B cell (primary cell): ENCODE measurements at regions of chr14 and their contacts with region 1.

Region 1: DNA sequence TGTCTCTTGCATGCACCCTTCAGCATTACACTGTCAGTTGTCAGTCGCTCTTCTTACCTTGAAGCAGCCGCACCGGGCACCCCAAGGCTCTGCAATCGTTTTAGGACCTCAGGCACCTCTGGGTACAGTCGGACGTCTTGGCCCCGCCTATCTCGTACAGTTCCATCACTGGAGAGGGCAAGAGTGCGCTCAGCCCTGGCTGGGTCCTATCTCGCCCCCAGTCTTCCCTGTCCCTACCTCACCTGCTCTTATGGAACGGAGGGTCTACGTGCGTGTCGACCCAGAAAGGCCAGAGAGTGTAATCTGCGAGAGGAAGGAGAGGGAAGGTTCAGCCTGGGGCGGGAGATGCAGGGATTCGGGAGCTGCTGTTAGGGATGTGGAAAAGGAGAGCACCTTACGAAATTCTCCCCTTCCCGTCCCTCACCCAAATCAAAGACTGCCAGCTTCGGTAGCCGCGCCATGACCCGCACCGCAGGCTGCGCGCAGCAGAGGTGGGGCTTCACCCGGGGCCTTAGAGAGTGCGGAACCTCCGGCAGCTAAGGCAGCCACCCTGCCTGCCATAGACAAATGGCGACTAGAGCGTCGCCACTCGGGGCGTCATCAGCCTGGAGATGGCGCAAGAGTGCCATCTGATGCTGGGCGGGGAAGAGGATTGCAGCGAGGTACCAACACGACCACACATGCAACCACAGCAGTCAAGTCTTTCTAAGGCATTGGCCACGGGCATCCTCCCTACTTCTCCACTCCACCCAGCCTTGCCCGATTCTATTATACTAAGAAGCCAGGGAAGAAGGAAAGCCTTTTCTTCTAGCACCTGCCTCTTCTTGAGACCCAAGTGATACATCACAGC is at the start of gene MDP1:
- DNase-seq: peak; percentile 94
- ATAC-seq: peak; percentile 75
- H3K4me3 ChIP-seq: peak within 1 kb of the TSS; percentile 88 to 99 (median 96)
- H3K4me3 Mint-ChIP-seq: peak within 1 kb of the TSS; percentile 93
- H3K27ac ChIP-seq: peak within 1 kb of the TSS; percentile 89 to 98
- H3K27ac Mint-ChIP-seq: peak within 1 kb of the TSS; percentile 96
- H3K4me1 ChIP-seq: peaks cover 32 to 33% of the 10 kb centered on the region in 2 donors
- H3K4me1 Mint-ChIP-seq: peaks cover 38% of the 10 kb centered on the region
- H3K27me3 ChIP-seq: no peaks in the 10 kb centered on the region
- H3K27me3 Mint-ChIP-seq: no peaks in the 10 kb centered on the region
- CTCF ChIP-seq: peak; percentile 80
- total RNA-seq, gene MDP1: 11.3 and 17.0 TPM in 2 replicates

Region 2: DNA sequence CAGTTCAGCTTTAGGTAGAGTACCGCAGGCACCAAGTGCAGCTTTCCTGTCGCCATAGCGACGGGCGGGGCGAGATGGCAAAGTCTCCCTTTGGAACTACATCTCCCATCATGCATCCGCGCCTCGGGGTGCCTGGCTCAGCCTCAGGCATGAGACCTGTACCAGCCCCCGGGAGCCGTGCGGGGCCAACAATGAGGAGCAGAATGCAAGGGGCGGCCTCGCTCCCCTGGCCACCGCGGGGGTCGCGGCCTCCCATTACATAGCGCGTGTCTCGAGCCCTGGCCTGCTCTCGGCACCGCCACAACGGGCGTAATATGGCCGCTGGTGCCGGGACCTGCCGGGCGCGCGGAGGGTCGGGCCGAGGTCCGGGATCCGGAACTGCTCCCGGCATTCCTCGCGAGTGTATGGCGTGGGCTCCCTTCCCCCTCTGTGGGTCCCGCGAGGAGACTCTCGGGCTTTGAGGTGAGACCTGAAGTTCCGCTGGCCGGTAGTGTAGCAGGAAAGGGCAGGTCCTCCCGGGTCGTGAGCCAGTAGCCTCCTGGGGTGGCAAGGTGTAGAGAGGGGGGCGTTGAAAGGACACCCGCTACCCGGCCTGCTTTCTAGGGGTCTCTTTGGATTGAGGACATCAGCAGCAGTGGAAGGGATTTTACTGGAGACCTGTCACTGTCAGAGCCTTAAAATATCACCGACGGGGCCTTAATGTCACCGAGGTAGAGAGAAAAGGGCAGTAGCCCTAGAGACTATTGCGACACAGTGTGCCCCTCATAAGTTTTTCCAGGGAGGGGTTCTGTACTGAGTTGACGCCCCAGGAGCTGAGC is 659.6 kb before region 1 on chr14 and contains the start of gene THTPA:
- CTCF ChIA-PET with region 1: no interaction called
- POLR2A ChIA-PET with region 1: no interaction called
- intact Hi-C with region 1: loop called (anchors 10 kb)
- DNase-seq: peak; percentile 96
- ATAC-seq: peak; percentile 78
- H3K4me3 ChIP-seq: peak within 1 kb of the TSS; percentile 17 to 97 (median 81)
- H3K4me3 Mint-ChIP-seq: peak within 1 kb of the TSS; percentile 98
- H3K27ac ChIP-seq: peak within 1 kb of the TSS; percentile 69 to 84
- H3K27ac Mint-ChIP-seq: peak within 1 kb of the TSS; percentile 99
- H3K4me1 ChIP-seq: peaks cover 19 to 36% of the 10 kb centered on the region in 2 donors
- H3K4me1 Mint-ChIP-seq: peaks cover 45% of the 10 kb centered on the region
- H3K27me3 ChIP-seq: no peaks in the 10 kb centered on the region
- H3K27me3 Mint-ChIP-seq: no peaks in the 10 kb centered on the region
- CTCF ChIP-seq: no peak
- total RNA-seq, gene THTPA: 21.4 and 21.5 TPM in 2 replicates

Region 3: GRCh38 chr14:24121210-24121609 is 94.5 kb before region 1 on chr14:
- CTCF ChIA-PET with region 1: no interaction called
- POLR2A ChIA-PET with region 1: no interaction called
- intact Hi-C with region 1: no loop called
- DNase-seq: no peak
- ATAC-seq: no peak
- H3K4me3 ChIP-seq: no peak overlapping the region
- H3K4me3 Mint-ChIP-seq: no peak overlapping the region
- H3K27ac ChIP-seq: no peak overlapping the region
- H3K27ac Mint-ChIP-seq: no peak overlapping the region
- H3K4me1 ChIP-seq: peaks cover 28 to 33% of the 10 kb centered on the region in 2 donors
- H3K4me1 Mint-ChIP-seq: peaks cover 34% of the 10 kb centered on the region
- H3K27me3 ChIP-seq: no peaks in the 10 kb centered on the region
- H3K27me3 Mint-ChIP-seq: no peaks in the 10 kb centered on the region
- CTCF ChIP-seq: no peak

Region 4: GRCh38 chr14:24141097-24141880 is 74.4 kb before region 1 on chr14 and contains the start of gene EMC9:
- CTCF ChIA-PET with region 1: interaction called, 3 read pairs
- POLR2A ChIA-PET with region 1: interaction called, 7 read pairs
- intact Hi-C with region 1: loop called (anchors 1 kb)
- DNase-seq: peak; percentile 99
- ATAC-seq: peak; percentile 89
- H3K4me3 ChIP-seq: peak within 1 kb of the TSS; percentile 67 to 93 (median 82)
- H3K4me3 Mint-ChIP-seq: peak within 1 kb of the TSS; percentile 96
- H3K27ac ChIP-seq: peak within 1 kb of the TSS; percentile 63 to 80
- H3K27ac Mint-ChIP-seq: peak within 1 kb of the TSS; percentile 95
- H3K4me1 ChIP-seq: peaks cover 33 to 50% of the 10 kb centered on the region in 2 donors
- H3K4me1 Mint-ChIP-seq: peaks cover 64% of the 10 kb centered on the region
- H3K27me3 ChIP-seq: no peaks in the 10 kb centered on the region
- H3K27me3 Mint-ChIP-seq: no peaks in the 10 kb centered on the region
- CTCF ChIP-seq: peak; percentile 37
- total RNA-seq, gene EMC9: 24.7 and 26.4 TPM in 2 replicates

Region 5: GRCh38 chr14:24171422-24172260 is 44.1 kb before region 1 on chr14 and contains the start of gene REC8:
- CTCF ChIA-PET with region 1: no interaction called
- POLR2A ChIA-PET with region 1: interaction called, 14 read pairs
- intact Hi-C with region 1: no loop called
- DNase-seq: peak; percentile 89
- ATAC-seq: peak; percentile 92
- H3K4me3 ChIP-seq: peak within 1 kb of the TSS; percentile 47 to 72 (median 60)
- H3K4me3 Mint-ChIP-seq: peak within 1 kb of the TSS; percentile 93
- H3K27ac ChIP-seq: no peak within 1 kb of the TSS
- H3K27ac Mint-ChIP-seq: peak within 1 kb of the TSS; percentile 79
- H3K4me1 ChIP-seq: peaks cover 11 to 23% of the 10 kb centered on the region in 2 donors
- H3K4me1 Mint-ChIP-seq: peaks cover 20% of the 10 kb centered on the region
- H3K27me3 ChIP-seq: no peaks in the 10 kb centered on the region
- H3K27me3 Mint-ChIP-seq: no peaks in the 10 kb centered on the region
- CTCF ChIP-seq: no peak
- total RNA-seq, gene REC8: 48.4 and 62.1 TPM in 2 replicates

Region 6: DNA sequence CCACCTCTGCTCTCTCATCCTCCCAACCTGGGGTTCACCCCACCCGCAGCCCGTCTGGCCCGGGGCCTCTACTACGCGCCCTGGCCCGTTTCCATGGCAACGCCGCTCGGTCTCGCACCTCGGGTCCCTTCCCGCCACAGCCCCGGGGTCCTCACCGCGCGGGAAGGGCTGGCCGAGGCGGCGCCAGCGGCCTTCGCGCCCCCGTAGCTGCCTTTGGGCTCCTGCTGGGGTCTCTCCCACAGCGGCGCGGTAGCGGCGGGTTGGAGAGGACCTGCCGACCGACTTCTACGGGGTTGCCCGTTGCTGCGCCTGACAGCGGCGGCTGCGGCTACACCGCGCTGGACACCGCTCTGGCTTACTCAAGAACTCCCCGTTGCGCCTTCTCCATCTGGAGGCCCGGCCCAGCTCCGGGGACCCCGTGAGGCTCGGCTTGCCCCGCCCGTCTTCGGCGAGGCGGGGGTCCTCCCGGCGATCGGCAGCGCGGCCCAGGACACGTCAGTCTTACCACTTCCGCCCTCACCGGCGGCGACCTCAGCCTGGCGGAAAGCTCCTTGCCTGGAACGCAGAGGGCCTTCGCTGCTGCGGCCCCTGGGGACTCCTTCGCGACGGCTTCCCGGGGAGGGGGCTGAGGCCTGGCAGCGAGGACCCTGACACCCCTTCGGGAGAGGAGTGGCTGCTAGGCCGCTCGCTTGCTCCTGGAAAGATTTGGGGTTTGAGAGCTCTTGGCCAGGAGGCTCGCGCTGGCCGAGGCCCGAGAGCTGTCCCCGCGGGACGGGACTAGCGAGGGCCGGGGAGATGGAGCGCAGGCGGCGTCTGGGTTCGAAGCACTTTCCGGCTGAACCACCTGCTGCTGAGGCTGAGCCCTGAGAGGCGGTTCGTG is 20.3 kb before region 1 on chr14 and contains the start of gene TM9SF1:
- CTCF ChIA-PET with region 1: interaction called, 21 read pairs
- POLR2A ChIA-PET with region 1: interaction called, 64 read pairs
- intact Hi-C with region 1: loop called (anchors 1 kb)
- DNase-seq: peak; percentile 96
- ATAC-seq: peak; percentile 90
- H3K4me3 ChIP-seq: peak within 1 kb of the TSS; percentile 82 to 99 (median 83)
- H3K4me3 Mint-ChIP-seq: peak within 1 kb of the TSS; percentile 89
- H3K27ac ChIP-seq: peak within 1 kb of the TSS; percentile 98 to 99
- H3K27ac Mint-ChIP-seq: peak within 1 kb of the TSS; percentile 99
- H3K4me1 ChIP-seq: peaks cover 25 to 26% of the 10 kb centered on the region in 2 donors
- H3K4me1 Mint-ChIP-seq: peaks cover 49% of the 10 kb centered on the region
- H3K27me3 ChIP-seq: no peaks in the 10 kb centered on the region
- H3K27me3 Mint-ChIP-seq: no peaks in the 10 kb centered on the region
- CTCF ChIP-seq: no peak
- total RNA-seq, gene TM9SF1: 24.5 and 33.9 TPM in 2 replicates

Region 7: DNA sequence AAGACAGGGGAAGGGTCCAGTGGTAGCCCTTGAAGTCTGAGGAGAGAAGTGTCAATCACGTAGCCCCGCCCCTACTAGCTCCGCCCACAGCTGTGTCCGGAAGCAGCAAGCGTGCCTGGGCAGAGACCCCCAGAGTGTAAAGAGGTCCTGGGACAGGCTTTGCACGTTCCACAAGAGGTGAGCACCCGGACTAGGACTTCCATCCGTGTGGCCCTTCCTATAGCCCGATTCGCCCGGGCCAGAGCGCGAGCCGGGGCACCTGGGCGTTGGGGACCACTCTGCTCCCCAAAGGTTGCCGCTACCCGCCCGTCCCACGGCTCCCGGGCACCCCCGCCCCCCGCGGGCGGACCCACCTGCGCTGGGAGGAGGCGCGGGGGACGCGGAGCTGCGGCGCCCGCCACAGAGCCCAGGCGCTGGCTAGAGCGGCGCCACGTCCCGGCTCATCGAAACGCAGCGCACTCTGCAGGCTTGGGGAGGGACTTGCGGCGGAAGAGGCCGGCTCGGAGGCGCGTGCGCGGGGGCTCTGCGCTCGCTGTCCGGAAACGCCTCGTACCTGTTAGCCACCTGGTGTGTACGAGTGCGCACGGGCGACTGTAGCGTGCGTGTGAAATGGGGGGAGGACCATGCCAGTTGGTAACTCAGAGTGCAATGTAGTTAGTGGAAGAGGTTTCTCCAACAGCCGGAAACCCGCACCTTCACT is 55.6 kb after region 1 on chr14 and contains the start of gene RABGGTA:
- CTCF ChIA-PET with region 1: interaction called, 24 read pairs
- POLR2A ChIA-PET with region 1: interaction called, 4 read pairs
- intact Hi-C with region 1: loop called (anchors 1 kb)
- DNase-seq: peak; percentile 98
- ATAC-seq: peak; percentile 87
- H3K4me3 ChIP-seq: peak within 1 kb of the TSS; percentile 45 to 96 (median 93)
- H3K4me3 Mint-ChIP-seq: peak within 1 kb of the TSS; percentile 94
- H3K27ac ChIP-seq: peak within 1 kb of the TSS; percentile 93 to 97
- H3K27ac Mint-ChIP-seq: peak within 1 kb of the TSS; percentile 94
- H3K4me1 ChIP-seq: peaks cover 32 to 39% of the 10 kb centered on the region in 2 donors
- H3K4me1 Mint-ChIP-seq: peaks cover 48% of the 10 kb centered on the region
- H3K27me3 ChIP-seq: no peaks in the 10 kb centered on the region
- H3K27me3 Mint-ChIP-seq: no peaks in the 10 kb centered on the region
- CTCF ChIP-seq: peak; percentile 75
- total RNA-seq, gene RABGGTA: 57.9 and 70.1 TPM in 2 replicates

Region 8: GRCh38 chr14:24310646-24311604 is 95.2 kb after region 1 on chr14 and contains the start of gene LTB4R:
- CTCF ChIA-PET with region 1: interaction called, 19 read pairs
- POLR2A ChIA-PET with region 1: interaction called, 7 read pairs
- intact Hi-C with region 1: loop called (anchors 1 kb)
- DNase-seq: peak; percentile 90
- ATAC-seq: peak; percentile 76
- H3K4me3 ChIP-seq: peak within 1 kb of the TSS; percentile 8 to 71 (median 57)
- H3K4me3 Mint-ChIP-seq: peak within 1 kb of the TSS; percentile 84
- H3K27ac ChIP-seq: peak within 1 kb of the TSS; percentile 65 to 83
- H3K27ac Mint-ChIP-seq: peak within 1 kb of the TSS; percentile 91
- H3K4me1 ChIP-seq: peaks cover 38 to 57% of the 10 kb centered on the region in 2 donors
- H3K4me1 Mint-ChIP-seq: peaks cover 61% of the 10 kb centered on the region
- H3K27me3 ChIP-seq: no peaks in the 10 kb centered on the region
- H3K27me3 Mint-ChIP-seq: no peaks in the 10 kb centered on the region
- CTCF ChIP-seq: peak; percentile 67
- total RNA-seq, gene LTB4R: 8.8 and 9.2 TPM in 2 replicates